ENCODE measurements at regions of chr3 and their contacts with region 1.

Region 1: GRCh38 chr3:195259475-195260279 is 11.3 kb downstream of the XXYLT1 start:
- DNase-seq: peak; percentile 77
- H3K4me3 ChIP-seq: peak overlapping the region; percentile 60 to 81 (median 64)
- H3K27ac ChIP-seq: peak overlapping the region; percentile 87 to 96 (median 94)
- H3K4me1 ChIP-seq: peaks cover 9 to 55% (median 29%) of the 10 kb centered on the region in 3 donors
- H3K27me3 ChIP-seq: no peaks in the 10 kb centered on the region
- CTCF ChIP-seq: peak in 5 of 6 experiments; percentile 12 to 100 (median 99)
- POLR2A ChIP-seq: peak in 2 of 4 donors; percentile 67 to 74

Region 2: GRCh38 chr3:195106418-195106906 is 153.2 kb before region 1 on chr3:
- intact Hi-C with region 1: loop called (anchors 5 kb)
- DNase-seq: no peak
- H3K4me3 ChIP-seq: peak overlapping the region in 2 of 4 donors; percentile 25 to 54
- H3K27ac ChIP-seq: peak overlapping the region in 3 of 4 donors; percentile 16 to 42 (median 29)
- H3K4me1 ChIP-seq: peaks cover 9 to 30% (median 13%) of the 10 kb centered on the region in 3 donors
- H3K27me3 ChIP-seq: no peaks in the 10 kb centered on the region
- CTCF ChIP-seq: peak; percentile 98 to 100 (median 99)
- POLR2A ChIP-seq: peak in 1 of 4 donors; percentile 9

Region 3: GRCh38 chr3:195162033-195162669 is 97.5 kb before region 1 on chr3:
- intact Hi-C with region 1: no loop called
- DNase-seq: no peak
- H3K4me3 ChIP-seq: no peak overlapping the region
- H3K27ac ChIP-seq: peak overlapping the region in 3 of 4 donors; percentile 81 to 84 (median 84)
- H3K4me1 ChIP-seq: peaks cover 5 to 50% (median 27%) of the 10 kb centered on the region in 3 donors
- H3K27me3 ChIP-seq: no peaks in the 10 kb centered on the region
- CTCF ChIP-seq: no peak
- POLR2A ChIP-seq: no peak